Left colon (tissue), 2 donors: ENCODE measurements at regions of chr9 and their contacts with region 1.

Region 1: GRCh38 chr9:87336914-87337333 is 160.7 kb upstream of the DAPK1 start:
- DNase-seq: peak in 1 of 2 donors; percentile 14
- ATAC-seq: peak; percentile 76

Region 2: GRCh38 chr9:87662808-87663528 is 326.0 kb after region 1 on chr9:
- intact Hi-C with region 1: loop called (anchors 2 to 10 kb)
- DNase-seq: peak; percentile 65 to 88
- ATAC-seq: peak; percentile 97